ENCODE measurements at regions of chr10 and their contacts with region 1.

Region 1: DNA sequence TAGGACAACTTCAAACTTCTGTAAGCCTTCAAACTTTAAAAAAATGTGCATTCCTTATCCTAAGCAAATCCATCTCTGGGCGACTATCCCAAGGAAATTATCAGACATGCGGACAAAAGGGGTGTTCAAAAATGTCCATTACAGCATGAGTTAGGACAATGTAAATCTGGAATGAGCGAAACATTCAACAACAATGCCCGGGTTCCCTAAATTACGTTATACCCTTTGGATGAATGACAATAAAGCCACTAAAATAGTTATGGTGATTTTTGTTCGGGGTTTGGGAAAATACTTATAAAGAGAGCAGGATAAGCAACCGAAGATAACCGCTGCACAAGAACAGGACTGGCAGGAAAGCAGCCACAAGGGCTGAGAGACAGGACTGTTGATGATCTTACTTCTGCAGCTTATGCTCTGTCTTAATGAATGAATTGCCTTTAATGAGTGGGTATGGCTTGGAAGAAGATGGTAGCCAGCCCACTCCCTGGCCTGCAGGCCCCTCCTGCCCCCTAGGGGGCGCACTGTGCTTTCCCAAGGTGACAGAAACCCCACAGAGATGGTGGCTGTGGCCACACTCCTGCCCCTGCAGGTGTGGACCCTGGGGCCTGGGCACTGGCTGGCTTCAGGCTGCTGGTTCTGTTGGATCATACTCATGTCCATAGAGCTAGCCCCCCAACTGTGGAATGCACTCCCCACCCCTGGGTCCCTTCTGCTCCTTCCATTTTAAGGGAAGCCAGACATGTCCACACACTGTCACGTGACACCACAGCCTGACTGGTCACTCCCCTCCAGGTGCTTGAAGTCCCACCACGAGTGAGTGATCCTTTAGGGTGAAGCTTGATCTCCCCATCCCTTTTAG is 45.0 kb downstream of the ZCCHC24 start:
- DNase-seq: peak in 1 of 2 donors; percentile 56
- ATAC-seq: peak in 1 of 2 donors; percentile 14
- H3K4me3 ChIP-seq: peak overlapping the region in 1 of 4 donors; percentile 20
- H3K27ac ChIP-seq: peak overlapping the region; percentile 80 to 87 (median 84)
- H3K4me1 ChIP-seq: peaks cover 24 to 44% of the 10 kb centered on the region in 2 donors
- H3K27me3 ChIP-seq: no peaks in the 10 kb centered on the region
- CTCF ChIP-seq: peak; percentile 66 to 88 (median 70)
- POLR2A ChIP-seq: no peak

Region 2: GRCh38 chr10:79195091-79195923 is 205.1 kb before region 1 on chr10:
- in situ Hi-C with region 1: no loop called
- intact Hi-C with region 1: no loop called
- DNase-seq: peak; percentile 77 to 86
- ATAC-seq: peak; percentile 77 to 86
- H3K4me3 ChIP-seq: no peak overlapping the region
- H3K27ac ChIP-seq: peak overlapping the region; percentile 51 to 76 (median 57)
- H3K4me1 ChIP-seq: peaks cover 25 to 31% of the 10 kb centered on the region in 2 donors
- H3K27me3 ChIP-seq: no peaks in the 10 kb centered on the region
- CTCF ChIP-seq: peak; percentile 90 to 96 (median 96)
- POLR2A ChIP-seq: no peak

Region 3: DNA sequence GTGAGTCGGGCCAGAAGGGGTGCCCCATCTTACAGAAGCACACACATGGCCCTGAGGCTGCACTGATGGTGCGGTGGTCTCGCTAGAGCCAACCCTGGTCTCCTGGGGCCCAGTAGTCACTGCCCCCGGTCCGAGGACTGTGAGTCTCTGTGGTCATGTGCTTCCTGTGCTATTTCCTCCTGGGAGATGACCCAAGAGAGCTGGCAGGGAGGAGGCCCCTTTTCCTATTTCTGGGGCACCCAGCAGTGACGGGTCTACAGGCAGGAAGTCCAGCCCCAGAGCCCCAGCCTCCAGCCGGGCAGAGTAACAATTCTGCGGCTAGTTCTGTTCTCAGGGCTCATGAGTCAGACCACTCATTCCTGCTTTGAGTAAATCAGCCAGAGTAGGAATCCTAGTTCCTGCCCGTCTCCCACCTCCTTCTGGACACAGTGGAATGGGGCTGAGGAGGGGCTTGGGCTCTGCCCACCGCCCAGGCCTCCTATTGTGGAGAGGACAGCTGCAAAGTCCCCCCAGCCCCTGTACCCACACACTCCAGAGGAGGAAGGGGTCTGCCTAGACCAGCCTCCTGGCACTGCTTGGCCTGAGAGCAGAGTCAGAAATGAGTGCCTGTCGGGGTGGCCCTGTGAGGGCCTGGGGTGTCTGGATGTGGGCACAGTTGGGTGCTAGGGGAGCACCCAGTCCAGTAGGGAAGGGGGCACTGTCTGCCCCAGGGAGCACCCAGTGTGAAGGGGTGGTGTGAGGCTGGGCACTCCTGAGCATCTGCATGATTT is 133.6 kb before region 1 on chr10:
- in situ Hi-C with region 1: no loop called
- intact Hi-C with region 1: loop called (anchors 5 kb)
- DNase-seq: peak; percentile 44 to 61
- ATAC-seq: peak; percentile 33 to 42
- H3K4me3 ChIP-seq: no peak overlapping the region
- H3K27ac ChIP-seq: peak overlapping the region; percentile 41 to 73 (median 62)
- H3K4me1 ChIP-seq: peaks cover 36 to 48% of the 10 kb centered on the region in 2 donors
- H3K27me3 ChIP-seq: no peaks in the 10 kb centered on the region
- CTCF ChIP-seq: no peak
- POLR2A ChIP-seq: no peak

Region 4: DNA sequence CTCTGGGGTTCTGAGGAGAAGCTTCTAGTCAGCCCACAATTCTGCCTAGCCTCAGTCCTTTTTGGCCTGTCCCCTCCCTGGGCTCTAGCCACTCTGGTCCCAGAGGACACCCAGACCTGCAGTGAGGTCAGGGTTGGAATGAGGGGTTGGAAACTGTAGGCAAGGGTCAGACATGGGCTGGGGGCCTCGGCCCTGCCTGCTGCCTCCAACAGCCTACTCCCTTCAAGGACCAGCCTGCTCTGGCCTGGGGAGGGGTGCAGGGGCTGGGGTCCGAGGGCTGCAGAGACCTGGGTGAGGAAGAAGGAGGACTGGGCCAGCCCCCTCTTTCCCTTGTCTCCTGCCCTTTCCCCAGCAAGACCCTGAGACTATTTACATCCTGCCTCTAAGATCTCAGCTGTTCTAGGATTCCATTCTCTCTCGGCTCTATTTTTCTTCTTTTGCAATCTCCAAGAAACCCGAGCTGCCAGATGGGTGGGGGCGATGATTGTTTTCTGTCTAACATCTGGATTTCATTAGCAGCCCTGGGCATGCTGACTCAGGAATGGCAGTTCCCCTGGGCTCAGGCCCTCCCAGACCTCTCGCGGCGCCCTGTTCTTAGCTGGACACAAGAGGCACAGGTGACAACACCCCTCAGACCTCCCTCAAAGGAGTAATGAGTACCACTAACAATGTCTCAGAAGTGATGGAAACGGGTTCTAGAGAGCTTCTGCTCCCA is 22.0 kb after region 1 on chr10:
- in situ Hi-C with region 1: no loop called
- intact Hi-C with region 1: loop called (anchors 1 kb)
- DNase-seq: peak in 1 of 2 donors; percentile 67
- ATAC-seq: no peak
- H3K4me3 ChIP-seq: no peak overlapping the region
- H3K27ac ChIP-seq: peak overlapping the region; percentile 83 to 90 (median 88)
- H3K4me1 ChIP-seq: peaks cover 80 to 88% of the 10 kb centered on the region in 2 donors
- H3K27me3 ChIP-seq: no peaks in the 10 kb centered on the region
- CTCF ChIP-seq: no peak
- POLR2A ChIP-seq: no peak

Region 5: DNA sequence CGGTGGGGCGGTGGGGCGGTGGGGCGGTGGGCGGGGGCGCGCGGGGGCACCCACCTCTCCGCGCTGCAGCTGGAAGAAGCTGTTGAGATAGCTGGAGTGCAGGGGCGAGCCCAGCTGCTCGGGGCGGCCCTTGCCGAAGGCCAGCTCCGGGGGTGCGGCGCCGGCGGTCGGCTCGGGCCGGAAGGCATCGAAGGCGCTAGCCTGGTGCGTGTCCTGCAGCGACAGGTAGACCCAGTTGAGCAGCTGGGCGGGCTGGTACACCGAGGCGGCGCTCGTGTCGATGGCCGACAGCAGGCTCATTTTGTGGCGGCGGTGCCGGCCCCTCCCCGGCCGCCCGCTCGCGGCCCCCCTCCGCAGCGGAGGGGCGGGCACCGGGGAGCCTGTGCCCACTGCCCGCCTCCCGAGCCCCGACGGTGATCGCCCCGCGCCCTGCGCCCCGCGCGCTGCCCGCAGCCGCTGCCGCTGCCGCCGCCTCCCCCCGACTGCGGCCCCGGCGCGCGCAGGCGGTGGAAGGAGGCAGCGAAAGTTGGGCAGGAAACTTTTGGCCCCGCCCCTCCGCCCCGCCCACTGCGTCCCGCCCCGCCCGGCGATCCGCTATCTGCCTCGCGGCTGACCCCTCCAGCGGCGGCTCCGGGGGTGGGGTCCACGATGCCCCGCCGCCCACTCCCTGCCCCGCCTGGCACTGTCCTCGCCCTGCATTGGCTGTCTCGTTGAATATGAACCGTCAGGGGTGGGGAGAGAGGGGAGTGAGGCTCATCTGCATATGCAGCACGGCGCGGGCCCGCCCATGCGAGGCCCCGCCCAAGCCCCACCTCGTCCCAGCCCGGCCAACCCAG is 45.0 kb after region 1 on chr10 and contains the start of gene ZCCHC24:
- in situ Hi-C with region 1: no loop called
- intact Hi-C with region 1: loop called (anchors 2 kb)
- DNase-seq: peak; percentile 99
- ATAC-seq: peak; percentile 57 to 64
- H3K4me3 ChIP-seq: peak within 1 kb of the TSS; percentile 69 to 88 (median 71)
- H3K27ac ChIP-seq: peak within 1 kb of the TSS; percentile 91 to 98 (median 94)
- H3K4me1 ChIP-seq: peaks cover 69 to 78% of the 10 kb centered on the region in 2 donors
- H3K27me3 ChIP-seq: no peaks in the 10 kb centered on the region
- CTCF ChIP-seq: peak in 1 of 5 experiments; percentile 12
- POLR2A ChIP-seq: peak; percentile 97 to 98
- total RNA-seq, gene ZCCHC24: 59.6 to 122 (median 84.5) TPM

Region 6: DNA sequence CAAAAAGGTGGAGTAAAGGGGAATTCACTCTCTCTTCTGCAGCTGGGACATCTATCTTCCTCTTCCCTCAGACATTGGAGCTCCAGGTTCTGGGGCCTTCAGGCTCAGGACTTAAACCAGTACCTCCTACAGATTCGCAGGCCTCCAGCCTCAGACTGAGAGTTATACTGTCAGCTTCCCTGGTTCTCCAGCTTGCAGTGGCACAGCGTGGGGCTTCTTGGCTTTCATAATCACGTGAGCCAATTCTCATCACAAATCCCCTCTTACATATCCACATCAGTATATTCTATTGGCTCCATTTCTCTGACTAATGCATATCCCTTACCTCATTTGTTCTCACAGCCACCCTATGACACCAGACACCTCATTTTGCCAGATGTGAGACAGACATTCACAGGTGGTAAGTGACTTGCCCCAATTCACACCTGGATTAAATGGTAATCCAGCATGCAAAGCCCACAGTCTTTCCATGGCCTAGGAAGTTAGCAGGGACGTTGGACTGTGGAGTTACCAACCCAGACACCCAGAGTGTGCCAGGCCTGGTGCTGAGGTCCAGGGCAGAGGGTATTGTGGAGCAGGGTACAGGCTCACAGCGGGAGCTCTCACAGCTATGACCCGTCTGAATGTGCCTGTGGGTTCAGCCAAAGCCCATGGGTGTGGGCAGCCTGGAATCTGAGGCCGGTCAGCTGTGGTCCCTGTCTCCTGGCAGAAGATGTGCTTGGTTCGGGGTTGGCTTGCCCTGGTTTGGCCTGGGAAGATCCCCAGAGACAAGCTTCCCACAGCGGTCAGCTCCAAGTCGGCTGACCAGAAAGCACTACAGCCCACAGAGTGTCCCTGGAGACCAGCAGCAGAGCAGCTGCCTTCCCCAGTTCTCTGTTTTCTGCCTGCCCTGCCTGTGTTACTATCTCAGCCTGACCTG is 63.5 kb after region 1 on chr10:
- in situ Hi-C with region 1: no loop called
- intact Hi-C with region 1: loop called (anchors 1 kb)
- DNase-seq: peak; percentile 77 to 91
- ATAC-seq: peak; percentile 77 to 86
- H3K4me3 ChIP-seq: no peak overlapping the region
- H3K27ac ChIP-seq: peak overlapping the region; percentile 64 to 85 (median 77)
- H3K4me1 ChIP-seq: peaks cover 30 to 42% of the 10 kb centered on the region in 2 donors
- H3K27me3 ChIP-seq: no peaks in the 10 kb centered on the region
- CTCF ChIP-seq: no peak
- POLR2A ChIP-seq: no peak

Measured in gastrocnemius medialis (tissue), 4 donors.